ENCODE measurements at regions of chr4 and their contacts with region 1.

Region 1: DNA sequence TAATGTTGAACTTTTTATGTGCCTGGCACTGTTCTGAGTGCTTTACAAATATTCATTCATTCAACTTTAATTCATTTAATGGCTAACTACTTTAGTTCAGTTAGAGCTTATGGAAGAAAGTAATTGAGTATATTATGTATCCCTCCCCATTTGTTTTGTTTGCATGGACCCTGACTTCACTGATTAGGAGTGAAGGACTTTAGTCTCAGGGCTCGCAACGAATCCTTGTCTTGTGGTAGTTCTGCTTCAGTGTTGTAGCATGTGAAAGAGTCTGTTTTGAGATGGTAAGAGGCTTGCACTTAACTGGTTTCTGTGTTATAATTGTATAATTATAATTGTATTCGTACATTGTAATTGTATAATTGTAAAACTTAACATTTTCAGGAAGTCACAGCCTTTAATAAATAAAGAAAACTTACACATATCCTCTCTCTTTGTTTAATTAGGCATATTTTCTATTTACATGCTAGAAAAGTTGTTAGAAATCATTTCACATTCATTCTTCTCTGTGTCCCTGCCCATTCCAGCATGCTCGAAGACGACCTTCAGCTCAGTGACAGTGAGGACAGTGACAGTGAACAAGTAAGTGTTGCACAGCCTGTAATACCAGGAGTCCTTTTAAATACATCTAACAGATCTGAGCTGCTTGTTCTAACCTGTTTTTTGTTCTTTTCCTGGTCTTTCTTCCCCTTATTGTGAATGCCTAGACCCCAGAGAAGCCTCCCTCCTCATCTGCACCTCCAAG is 115.1 kb downstream of the KLHL8 start:
- DNase-seq: no peak
- H3K4me3 ChIP-seq: no peak overlapping the region
- H3K27ac ChIP-seq: no peak overlapping the region
- H3K27me3 ChIP-seq: no peaks in the 10 kb centered on the region
- CTCF ChIP-seq: no peak

Region 2: GRCh38 chr4:87144356-87144755 is 39.1 kb after region 1 on chr4:
- CTCF ChIA-PET with region 1: interaction called, 12 read pairs
- POLR2A ChIA-PET with region 1: no interaction called
- DNase-seq: no peak
- H3K4me3 ChIP-seq: no peak overlapping the region
- H3K27ac ChIP-seq: no peak overlapping the region
- H3K27me3 ChIP-seq: no peaks in the 10 kb centered on the region
- CTCF ChIP-seq: no peak

Measured in AG04450 (cell line).